ENCODE measurements at regions of chr2 and their contacts with region 1.

Region 1: DNA sequence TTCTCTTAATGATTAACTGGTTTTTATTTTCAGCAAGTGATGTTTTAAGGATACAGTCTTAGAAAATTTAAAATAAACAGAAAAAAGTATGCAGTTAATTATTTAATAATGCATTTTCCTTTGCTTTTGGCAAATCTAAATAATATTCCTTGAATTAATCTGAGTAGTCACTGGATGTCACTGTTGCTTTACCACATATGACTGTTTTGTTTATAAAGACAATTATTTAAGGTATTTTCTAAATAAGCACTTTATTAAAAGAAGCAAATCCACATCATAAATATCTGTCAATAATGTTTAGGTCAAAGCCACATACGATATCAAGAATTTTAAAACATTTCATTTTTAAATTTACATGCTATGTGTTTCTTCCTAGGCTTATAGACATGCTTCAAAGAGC is 40.6 kb upstream of the TFPI start:
- DNase-seq: no peak
- ATAC-seq: no peak

Region 2: DNA sequence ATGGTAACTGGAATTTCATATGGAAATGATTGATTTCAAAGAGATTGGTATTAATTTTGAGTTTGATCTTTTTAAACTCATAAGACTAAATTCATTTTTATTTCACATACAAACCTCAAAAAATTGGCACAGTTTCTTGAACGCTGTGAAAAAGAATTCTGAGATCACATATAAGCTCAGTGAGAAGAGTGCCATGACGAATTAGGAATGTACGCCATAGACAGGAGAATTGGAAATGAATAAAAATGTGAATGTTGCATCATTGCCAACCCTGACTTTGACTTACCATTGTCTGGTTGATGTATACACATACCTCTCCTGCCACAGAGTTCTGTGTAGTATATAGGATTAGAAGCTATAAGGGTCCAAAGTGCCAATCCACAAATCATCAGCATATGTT is 1399.1 kb before region 1 on chr2:
- intact Hi-C with region 1: no loop called
- DNase-seq: no peak
- ATAC-seq: no peak

Region 3: GRCh38 chr2:187390891-187391290 is 203.9 kb before region 1 on chr2:
- intact Hi-C with region 1: no loop called
- DNase-seq: no peak
- ATAC-seq: no peak

Region 4: DNA sequence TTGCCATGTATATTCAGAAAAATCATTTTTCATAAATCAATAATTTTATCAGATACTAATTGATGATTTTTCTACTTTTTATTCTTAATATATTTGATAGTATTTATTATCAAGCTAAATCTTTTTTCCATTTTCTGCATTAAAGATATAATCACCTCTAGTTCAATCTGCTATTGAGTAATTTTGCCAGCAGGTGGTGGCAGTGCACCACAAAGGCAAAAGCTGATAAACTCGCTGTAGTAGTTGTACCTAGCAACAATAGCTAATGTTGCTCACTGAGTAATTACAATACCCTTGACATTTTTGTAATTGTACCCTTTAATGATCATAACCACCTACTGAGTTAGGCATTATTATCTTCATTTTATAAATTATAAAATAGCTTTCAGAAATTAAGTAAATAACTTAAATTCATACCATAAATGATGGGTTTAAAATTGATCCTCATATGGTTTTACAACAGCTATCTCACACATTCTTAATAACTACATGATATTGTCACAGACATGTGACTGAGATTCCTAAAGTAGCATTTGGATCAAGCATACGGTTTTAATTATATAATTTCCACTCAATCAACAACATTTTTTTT is 94.8 kb before region 1 on chr2:
- intact Hi-C with region 1: no loop called
- DNase-seq: peak; percentile 65
- ATAC-seq: peak; percentile 89

Region 5: DNA sequence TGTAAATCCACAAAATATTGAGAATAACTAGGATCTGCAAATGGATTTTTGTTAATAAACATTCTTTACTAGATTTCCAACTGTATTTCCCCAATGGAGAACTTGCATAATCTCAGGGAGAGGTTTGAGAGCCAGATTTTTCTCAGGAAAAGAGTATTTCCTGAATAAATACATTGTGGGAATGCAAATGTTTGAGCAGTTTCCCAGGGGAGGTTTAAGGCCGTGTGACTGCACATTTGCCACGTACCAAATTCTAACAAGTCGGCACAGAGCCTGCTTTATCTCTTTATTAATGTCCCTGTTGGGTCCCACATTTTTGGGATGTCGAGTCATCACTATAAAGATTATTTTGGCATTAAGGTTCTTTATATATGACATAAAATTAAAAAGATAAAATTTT is 67.5 kb before region 1 on chr2:
- intact Hi-C with region 1: no loop called
- DNase-seq: no peak
- ATAC-seq: peak; percentile 22

Region 6: DNA sequence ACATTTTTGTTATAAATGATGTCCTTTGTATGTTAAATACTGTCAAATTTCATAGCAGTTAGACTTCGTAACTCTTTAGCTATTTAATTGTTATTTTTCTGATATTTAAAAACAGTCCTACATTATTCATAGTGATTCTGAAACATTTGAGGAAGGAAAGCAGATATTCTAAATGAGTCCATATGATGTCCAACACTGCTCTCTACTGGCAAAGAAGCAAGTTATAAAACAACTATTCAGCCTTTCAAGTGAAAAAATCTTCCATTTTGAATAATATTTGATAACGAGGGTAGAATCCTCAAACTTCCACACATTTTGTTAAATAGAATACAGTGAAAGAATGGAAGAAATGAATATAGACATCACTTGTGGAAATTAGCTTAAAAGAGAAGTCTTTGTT is 917.7 kb after region 1 on chr2:
- intact Hi-C with region 1: loop called (anchors 10 kb)
- DNase-seq: no peak
- ATAC-seq: peak; percentile 82

Measured in sciatic nerve (tissue), 2 donors.